ENCODE measurements at regions of chr5 and their contacts with region 1.

Region 1: DNA sequence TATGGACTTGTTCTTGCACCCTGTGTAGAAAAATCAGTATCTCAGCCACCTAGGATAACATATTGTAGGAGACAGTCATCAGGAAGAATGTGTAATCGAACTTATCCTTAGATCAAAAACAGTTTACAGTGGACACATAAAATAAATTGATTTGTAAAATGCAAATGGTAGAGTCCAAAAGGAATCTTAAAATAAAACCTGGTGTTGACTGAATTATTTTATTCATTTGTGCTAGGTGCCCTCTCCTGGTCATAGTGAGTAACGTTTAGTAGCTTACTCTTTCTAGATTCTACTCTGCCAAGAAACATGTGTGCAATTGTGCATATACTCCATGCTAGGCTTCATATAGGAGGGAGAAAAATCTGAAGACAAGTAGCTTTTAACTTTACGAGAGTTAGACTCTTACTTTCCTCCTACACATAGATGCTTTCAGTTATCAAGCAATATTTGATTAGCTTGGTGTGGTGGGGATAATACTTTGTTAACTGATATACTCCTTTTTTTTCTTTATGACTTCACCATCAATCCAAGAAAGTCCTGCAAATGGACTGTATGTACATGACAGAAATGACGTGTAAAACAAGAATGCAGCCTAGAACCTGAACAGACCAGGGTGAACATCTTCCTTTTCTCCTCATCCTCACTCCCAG is 23.7 kb upstream of the LOX start:
- DNase-seq: no peak
- H3K4me3 ChIP-seq: no peak overlapping the region
- H3K27me3 ChIP-seq: no peaks in the 10 kb centered on the region
- CTCF ChIP-seq: peak; percentile 64

Region 2: GRCh38 chr5:121899346-121899745 is 202.4 kb before region 1 on chr5:
- CTCF ChIA-PET with region 1: no interaction called
- POLR2A ChIA-PET with region 1: no interaction called
- DNase-seq: no peak
- H3K4me3 ChIP-seq: no peak overlapping the region
- H3K27me3 ChIP-seq: no peaks in the 10 kb centered on the region
- CTCF ChIP-seq: no peak

Region 3: DNA sequence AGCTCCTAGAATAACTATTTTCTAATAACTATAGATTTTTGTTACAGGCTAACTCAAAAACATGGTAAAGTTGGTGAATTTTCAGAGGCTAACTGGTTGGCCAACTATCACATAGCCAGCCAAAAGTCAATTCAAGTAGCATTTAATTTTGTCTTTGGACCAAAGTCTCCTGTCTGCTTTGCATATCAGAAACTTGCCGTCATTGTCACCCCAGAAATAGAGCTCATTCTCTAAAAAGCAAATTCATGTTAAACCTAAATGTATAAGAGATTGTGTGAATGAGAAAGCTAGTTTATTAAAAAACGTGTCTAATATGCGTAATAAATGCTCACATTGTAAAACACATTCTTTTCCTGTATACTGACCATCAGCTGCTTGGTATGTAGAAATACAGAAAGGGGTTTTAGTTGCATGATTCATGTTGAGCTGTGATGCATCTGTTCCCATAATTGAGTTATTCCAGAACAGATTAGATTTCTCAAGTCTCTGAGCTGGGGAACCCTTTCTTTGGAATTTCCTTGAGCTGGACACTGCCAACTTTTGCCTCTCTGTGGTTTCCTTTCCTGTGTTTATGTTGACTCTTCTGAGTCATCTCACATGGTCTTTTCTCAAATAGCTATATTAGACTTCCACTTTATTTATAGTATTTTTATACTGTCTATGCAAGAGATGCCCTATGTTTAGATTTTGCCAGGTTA is 132.7 kb before region 1 on chr5:
- CTCF ChIA-PET with region 1: interaction called, 10 read pairs
- POLR2A ChIA-PET with region 1: no interaction called
- DNase-seq: peak; percentile 97
- H3K4me3 ChIP-seq: no peak overlapping the region
- H3K27me3 ChIP-seq: no peaks in the 10 kb centered on the region
- CTCF ChIP-seq: no peak

Region 4: DNA sequence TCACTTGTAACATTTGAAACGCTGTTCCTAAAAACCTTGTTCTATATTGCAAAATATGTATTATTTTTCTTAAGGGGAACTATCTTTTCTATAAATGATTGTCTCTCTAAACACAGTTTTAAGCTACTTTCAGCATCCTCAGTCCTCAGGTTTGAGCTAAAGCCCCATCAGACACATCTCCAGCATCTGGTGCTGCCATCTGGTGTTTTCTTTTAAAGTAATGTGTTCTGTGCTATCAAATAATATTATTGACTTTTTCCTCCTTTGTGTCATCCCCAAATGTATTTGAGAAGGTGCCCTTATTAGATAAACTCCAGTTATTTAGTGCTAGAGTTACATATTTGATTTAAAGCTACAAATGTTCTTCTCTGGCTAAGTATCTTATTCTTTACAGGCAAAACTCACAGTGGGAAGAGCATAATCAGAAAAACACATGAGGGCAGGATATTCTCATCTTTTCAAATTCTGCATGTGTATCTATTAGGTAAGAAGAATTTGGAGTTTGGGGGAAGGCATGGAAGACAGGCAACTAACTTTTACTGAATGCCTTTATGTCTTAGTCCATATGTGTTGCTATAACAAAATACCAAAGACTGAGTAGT is 55.1 kb after region 1 on chr5:
- CTCF ChIA-PET with region 1: interaction called, 13 read pairs
- POLR2A ChIA-PET with region 1: no interaction called
- DNase-seq: no peak
- H3K4me3 ChIP-seq: no peak overlapping the region
- H3K27me3 ChIP-seq: no peaks in the 10 kb centered on the region
- CTCF ChIP-seq: peak; percentile 50

Measured in BJ (cell line).